ENCODE measurements at regions of chr16 and their contacts with region 1.

Region 1: GRCh38 chr16:10325783-10326543 is 59.9 kb upstream of the ATF7IP2 start:
- DNase-seq: no peak
- ATAC-seq: no peak
- H3K4me3 ChIP-seq: no peak overlapping the region
- H3K27ac ChIP-seq: no peak overlapping the region
- H3K4me1 ChIP-seq: 0 out of 2 replicates have a peak, but pooled peaks cover 3% of the 10 kb centered on the region
- H3K27me3 ChIP-seq: no peaks in the 10 kb centered on the region
- CTCF ChIP-seq: no peak
- EP300 ChIP-seq: no peak
- POLR2A ChIP-seq: no peak
- RAD21 ChIP-seq: no peak

Region 2: GRCh38 chr16:10352262-10352661 is 26.3 kb after region 1 on chr16:
- CTCF ChIA-PET with region 1: no interaction called
- POLR2A ChIA-PET with region 1: no interaction called
- RAD21 ChIA-PET with region 1: no interaction called
- SMC1A ChIA-PET with region 1: no interaction called
- in situ Hi-C with region 1: no loop called
- intact Hi-C with region 1: no loop called
- DNase-seq: no peak
- ATAC-seq: no peak
- H3K4me3 ChIP-seq: no peak overlapping the region
- H3K27ac ChIP-seq: no peak overlapping the region
- H3K4me1 ChIP-seq: no peaks in the 10 kb centered on the region
- H3K27me3 ChIP-seq: no peaks in the 10 kb centered on the region
- CTCF ChIP-seq: no peak
- EP300 ChIP-seq: no peak
- POLR2A ChIP-seq: no peak
- RAD21 ChIP-seq: no peak

Region 3: DNA sequence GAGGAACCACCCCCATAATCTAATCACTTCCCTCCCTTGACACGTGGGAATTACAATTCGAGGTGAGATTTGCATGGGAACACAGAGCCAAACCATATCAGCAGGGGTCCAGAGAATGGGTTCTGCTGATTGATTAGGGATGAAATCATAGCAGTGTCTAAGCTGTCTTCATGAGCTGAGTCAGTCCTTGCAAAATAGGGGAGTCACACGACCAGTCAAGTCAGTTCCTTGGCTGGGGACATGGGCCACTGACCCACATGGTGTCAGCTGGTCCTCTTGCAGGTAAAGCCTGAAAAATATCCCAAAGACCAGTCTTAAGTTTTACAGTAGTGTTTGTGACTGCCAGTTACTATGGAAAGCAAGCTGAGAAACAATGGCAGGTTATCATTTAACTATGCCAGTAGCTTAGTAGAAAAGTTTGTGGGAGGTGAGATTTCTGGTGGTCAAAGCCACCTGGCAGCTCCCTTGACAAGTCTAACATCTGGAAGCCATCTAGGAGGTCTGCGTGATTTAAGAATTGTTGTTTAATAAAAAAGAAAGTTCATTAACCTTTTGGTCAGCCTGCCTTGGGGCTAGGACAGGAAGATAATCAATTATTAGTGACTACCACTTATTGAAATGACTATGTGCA is 44.2 kb after region 1 on chr16:
- CTCF ChIA-PET with region 1: no interaction called
- POLR2A ChIA-PET with region 1: interaction called, 3 read pairs
- RAD21 ChIA-PET with region 1: no interaction called
- SMC1A ChIA-PET with region 1: interaction called, 4 read pairs
- in situ Hi-C with region 1: no loop called
- intact Hi-C with region 1: loop called (anchors 5 kb)
- DNase-seq: peak; percentile 19
- ATAC-seq: peak; percentile 79
- H3K4me3 ChIP-seq: no peak overlapping the region
- H3K27ac ChIP-seq: no peak overlapping the region
- H3K4me1 ChIP-seq: no peaks in the 10 kb centered on the region
- H3K27me3 ChIP-seq: no peaks in the 10 kb centered on the region
- CTCF ChIP-seq: no peak
- EP300 ChIP-seq: no peak
- POLR2A ChIP-seq: no peak
- RAD21 ChIP-seq: no peak